Psoas muscle (tissue), 8 donors: ENCODE measurements at regions of chr15 and their contacts with region 1.

Region 1: DNA sequence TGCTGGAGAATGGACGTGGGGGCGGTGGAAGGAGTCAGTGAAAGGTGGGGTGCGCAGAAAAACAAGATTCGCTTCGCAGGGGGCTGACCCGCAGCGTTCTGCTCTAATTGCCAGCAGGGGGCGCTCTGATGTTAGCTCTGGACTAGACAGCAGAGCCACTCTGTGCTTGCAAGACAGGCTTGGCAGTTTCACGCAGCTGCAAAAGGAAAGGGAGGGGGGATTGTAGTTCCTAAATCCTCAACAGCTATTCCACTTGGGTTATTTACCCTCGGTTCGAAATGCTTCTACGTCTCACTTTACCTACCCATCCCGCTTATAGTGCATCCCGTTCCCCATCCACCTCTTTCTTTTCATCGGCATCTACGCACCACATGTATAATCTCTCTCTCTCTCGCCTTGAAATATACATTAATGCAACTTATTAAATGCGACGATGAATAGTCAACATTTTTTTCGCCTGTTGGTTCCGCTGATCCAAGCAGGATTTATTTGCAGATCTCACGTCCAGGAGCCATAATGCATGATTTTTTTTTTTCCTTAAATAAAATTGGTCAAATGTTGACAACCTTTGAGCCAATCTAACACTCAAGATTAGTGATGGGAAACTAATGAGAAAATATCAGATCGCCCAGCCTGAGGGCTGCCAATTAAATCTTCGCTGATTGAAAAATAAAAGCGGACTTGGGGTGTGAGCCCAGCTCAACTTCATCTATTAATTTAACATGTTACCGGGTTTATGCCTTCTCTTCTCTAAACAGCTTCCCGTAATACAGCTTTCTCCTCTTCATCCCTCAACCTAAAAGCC is 216.4 kb downstream of the MEIS2 start:
- DNase-seq: peak; percentile 87 to 88
- ATAC-seq: peak; percentile 73 to 92 (median 78)
- H3K4me3 ChIP-seq: peak overlapping the region; percentile 31
- H3K27ac ChIP-seq: no peak overlapping the region
- H3K4me1 ChIP-seq: peaks cover 15% of the 10 kb centered on the region
- H3K27me3 ChIP-seq: peaks cover 13 to 98% (median 43%) of the 10 kb centered on the region in 3 donors
- CTCF ChIP-seq: peak; percentile 69

Region 2: DNA sequence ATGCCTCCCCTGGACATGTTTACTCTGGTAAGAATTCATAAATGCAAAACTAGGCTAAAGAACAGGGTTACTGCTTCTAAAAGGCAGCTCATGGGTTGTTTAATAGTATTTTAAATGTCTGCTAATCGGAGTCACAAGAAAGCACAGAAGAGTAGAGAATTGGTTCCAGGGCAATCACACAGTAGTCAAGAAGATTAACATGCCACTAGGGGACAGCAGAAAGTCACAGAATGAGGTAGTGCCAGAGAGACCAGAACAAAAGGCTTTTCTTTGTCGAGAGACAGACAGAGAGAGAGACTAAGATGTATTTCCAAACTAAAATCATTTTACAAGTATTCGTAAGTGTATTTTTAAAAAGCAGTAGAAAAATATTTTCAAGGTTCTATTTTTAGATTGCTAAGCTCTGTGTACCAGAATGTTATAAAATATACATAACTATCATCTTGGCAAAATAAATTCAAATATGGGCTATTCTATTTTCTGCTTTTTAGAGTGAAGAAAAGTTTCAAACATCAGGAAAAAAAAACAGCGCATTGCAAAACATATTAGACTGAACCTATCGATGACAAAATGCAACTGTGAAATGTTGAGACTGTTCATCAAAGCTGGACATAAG is 382.7 kb before region 1 on chr15:
- intact Hi-C with region 1: loop called in 1 of 2 experiments (anchors 10 kb)
- DNase-seq: no peak
- ATAC-seq: peak; percentile 83 to 95 (median 94)
- H3K4me3 ChIP-seq: no peak overlapping the region
- H3K27ac ChIP-seq: no peak overlapping the region
- H3K4me1 ChIP-seq: no peaks in the 10 kb centered on the region
- H3K27me3 ChIP-seq: peaks cover 0 to 11% (median 0%) of the 10 kb centered on the region in 3 donors
- CTCF ChIP-seq: peak; percentile 84

Region 3: DNA sequence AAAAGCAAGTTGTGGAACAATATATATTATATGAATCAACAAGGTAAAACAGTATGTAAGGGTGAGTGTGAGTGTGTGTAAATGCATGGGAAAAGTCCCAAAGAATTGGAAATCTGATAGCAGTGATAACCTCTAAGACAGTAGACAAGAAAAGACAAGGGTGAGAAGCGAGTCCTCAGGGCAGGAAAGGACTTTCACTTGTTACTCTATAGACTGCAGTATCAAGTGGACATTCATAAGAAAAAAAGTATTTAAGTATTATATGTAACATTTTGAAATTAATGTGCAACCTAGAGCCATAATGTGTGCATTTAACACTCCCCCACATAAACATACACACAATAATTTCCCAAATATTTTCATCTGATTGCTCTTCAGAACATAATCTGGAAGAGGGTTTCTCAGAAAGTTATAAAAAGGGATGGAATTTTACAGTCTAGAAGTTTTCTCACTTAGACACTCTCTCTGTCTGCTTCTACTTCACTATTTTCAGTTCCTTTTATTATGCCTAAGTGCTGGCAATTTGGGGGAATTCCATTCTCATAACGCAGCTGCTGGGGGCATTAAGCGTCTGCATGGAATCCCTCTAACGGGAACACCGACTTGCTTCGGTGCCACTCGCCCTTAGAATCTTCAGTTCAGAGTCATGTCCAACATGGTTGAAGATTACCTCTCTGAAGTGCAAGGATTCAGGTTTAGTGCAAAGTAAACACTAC is 354.5 kb before region 1 on chr15:
- intact Hi-C with region 1: no loop called
- DNase-seq: no peak
- ATAC-seq: no peak
- H3K4me3 ChIP-seq: no peak overlapping the region
- H3K27ac ChIP-seq: no peak overlapping the region
- H3K4me1 ChIP-seq: no peaks in the 10 kb centered on the region
- H3K27me3 ChIP-seq: no peaks in the 10 kb centered on the region
- CTCF ChIP-seq: no peak

Region 4: DNA sequence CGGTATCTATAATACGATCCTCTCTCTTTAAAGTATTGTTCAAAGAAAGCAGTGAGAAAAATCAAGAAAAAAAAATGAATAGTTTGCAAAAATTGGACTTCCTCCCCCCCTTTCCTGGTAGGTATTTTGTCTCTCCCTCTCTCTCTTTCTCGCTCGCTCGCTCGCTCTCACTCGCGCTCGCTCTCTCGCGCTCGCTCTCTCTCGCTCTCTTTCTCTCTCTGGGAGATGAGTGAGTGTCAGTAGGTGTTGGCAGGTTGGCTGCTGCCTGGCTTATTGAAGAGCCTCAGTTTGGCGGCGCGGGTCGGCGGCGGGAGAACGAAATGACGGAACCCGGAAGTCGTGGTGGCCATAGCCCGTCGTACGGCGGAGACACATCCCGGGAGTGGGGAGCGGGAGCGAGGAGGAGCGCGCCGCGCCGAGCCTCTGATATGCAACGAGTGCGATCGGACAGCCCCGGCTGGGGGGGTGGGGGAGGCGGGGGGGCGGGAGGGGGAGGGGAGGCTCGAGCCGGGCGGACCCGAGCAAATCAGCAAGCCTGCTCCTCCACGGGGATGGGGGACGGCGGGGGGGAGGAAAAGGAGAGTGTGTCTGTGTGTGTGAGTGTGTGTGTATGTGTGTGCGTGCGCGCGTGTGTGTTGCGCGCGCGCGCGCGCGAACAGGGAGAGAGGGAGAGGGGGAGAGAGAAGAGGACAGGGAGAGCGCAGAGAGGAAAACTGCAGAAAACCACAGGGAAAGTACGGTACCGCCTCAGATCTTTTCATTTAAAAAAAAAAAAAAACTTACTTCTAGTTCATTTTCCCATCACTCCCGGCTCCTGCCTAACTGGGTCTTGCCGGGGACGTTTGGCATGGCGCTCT is 216.4 kb after region 1 on chr15 and contains the start of gene MEIS2:
- intact Hi-C with region 1: loop called in 1 of 2 experiments (anchors 10 kb)
- DNase-seq: peak; percentile 92
- ATAC-seq: peak; percentile 68 to 72 (median 72)
- H3K4me3 ChIP-seq: peak within 1 kb of the TSS; percentile 89
- H3K27ac ChIP-seq: peak within 1 kb of the TSS; percentile 89
- H3K4me1 ChIP-seq: peaks cover 4% of the 10 kb centered on the region
- H3K27me3 ChIP-seq: peaks cover 6 to 31% (median 26%) of the 10 kb centered on the region in 3 donors
- CTCF ChIP-seq: no peak
- total RNA-seq, gene MEIS2: 1.9 to 24.3 (median 9.2) TPM

Region 5: GRCh38 chr15:37109872-37110572 is 226.1 kb after region 1 on chr15:
- intact Hi-C with region 1: loop called (anchors 5 to 10 kb)
- DNase-seq: peak; percentile 51 to 64
- ATAC-seq: peak in 3 of 4 donors; percentile 58 to 82 (median 60)
- H3K4me3 ChIP-seq: peak overlapping the region; percentile 63
- H3K27ac ChIP-seq: no peak overlapping the region
- H3K4me1 ChIP-seq: no peaks in the 10 kb centered on the region
- H3K27me3 ChIP-seq: peaks cover 12 to 68% (median 20%) of the 10 kb centered on the region in 3 donors
- CTCF ChIP-seq: no peak

Region 6: DNA sequence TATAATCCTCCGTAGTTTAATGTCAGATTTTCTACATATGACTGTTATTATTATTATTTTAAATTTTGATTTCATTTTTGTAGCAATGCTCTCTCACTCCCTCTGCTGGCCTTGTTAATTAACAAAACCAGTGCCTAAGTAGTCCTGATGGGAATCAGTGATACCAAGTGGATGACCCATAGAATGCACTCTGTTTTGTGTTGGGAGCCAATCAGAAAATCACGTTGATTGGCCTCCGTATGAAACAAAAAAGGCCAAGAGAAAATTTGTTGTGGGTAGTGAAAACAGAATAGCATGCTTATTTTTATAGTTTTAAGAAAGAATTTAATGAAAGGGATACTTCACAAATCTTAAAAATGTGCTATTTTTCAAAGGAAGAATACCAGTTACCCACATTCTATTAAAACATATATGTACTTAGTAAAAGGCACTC is 250.8 kb after region 1 on chr15:
- intact Hi-C with region 1: loop called (anchors 2 to 5 kb)
- DNase-seq: no peak
- ATAC-seq: peak in 3 of 4 donors; percentile 50 to 82 (median 74)
- H3K4me3 ChIP-seq: no peak overlapping the region
- H3K27ac ChIP-seq: no peak overlapping the region
- H3K4me1 ChIP-seq: no peaks in the 10 kb centered on the region
- H3K27me3 ChIP-seq: no peaks in the 10 kb centered on the region
- CTCF ChIP-seq: peak; percentile 75